AG04450 (cell line): ENCODE measurements at regions of chr3 and their contacts with region 1.

Region 1: GRCh38 chr3:14210843-14211594 is 32.4 kb downstream of the LSM3 start:
- DNase-seq: peak; percentile 47
- H3K4me3 ChIP-seq: no peak overlapping the region
- H3K27ac ChIP-seq: peak overlapping the region; percentile 39
- H3K27me3 ChIP-seq: no peaks in the 10 kb centered on the region
- CTCF ChIP-seq: no peak

Region 2: DNA sequence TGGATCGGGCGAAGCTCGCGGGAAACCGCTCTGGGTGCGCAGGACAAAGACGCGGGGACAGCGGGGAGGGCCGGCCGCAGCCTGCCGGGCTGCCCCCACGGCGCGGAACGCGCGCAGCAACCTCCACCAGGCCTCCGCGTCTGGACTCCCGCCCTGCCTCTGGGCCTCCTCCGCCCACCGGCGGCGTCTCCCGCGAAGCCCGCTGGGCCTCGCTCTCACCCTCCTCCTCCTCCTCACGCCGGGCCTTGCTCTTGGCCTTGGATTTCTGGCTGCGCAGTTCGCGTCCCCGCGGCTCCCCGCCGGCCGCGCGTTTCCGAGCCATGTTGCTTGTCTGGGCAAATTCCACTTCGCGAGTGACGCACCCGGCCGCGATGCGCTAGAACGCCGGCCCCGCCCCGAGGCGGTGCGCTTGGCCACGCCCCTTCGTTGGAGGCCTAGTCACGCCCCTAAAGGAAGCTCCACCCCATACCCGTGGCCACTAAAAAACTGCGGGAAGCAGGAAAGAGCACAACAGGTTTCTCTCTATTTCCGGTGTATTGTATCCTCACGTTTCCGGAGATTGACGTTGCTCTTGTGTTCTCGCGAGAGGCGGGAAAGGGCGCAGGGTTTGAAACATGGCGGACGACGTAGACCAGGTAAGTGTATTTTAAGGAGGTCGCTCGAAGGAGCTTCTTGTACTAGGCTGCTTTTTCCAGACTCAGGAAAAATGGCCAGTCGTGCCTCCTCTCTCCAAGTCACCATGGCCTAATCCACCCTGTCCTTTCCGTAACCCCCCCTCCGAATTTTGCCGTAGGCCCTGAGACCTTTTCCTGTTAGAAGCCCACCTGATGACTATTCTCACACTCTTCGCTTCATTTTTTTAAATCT is 32.5 kb before region 1 on chr3 and contains the starts of genes LSM3 and XPC:
- CTCF ChIA-PET with region 1: no interaction called
- POLR2A ChIA-PET with region 1: interaction called, 19 read pairs
- DNase-seq: peak; percentile 98
- H3K4me3 ChIP-seq: peak within 1 kb of the TSS; percentile 98
- H3K27ac ChIP-seq: peak within 1 kb of the TSS; percentile 94
- H3K27me3 ChIP-seq: no peaks in the 10 kb centered on the region
- CTCF ChIP-seq: no peak
- polyA plus RNA-seq, gene LSM3: 7.4 and 11.9 TPM in 2 replicates
- polyA plus RNA-seq, gene XPC: 38.4 and 39.0 TPM in 2 replicates

Region 3: DNA sequence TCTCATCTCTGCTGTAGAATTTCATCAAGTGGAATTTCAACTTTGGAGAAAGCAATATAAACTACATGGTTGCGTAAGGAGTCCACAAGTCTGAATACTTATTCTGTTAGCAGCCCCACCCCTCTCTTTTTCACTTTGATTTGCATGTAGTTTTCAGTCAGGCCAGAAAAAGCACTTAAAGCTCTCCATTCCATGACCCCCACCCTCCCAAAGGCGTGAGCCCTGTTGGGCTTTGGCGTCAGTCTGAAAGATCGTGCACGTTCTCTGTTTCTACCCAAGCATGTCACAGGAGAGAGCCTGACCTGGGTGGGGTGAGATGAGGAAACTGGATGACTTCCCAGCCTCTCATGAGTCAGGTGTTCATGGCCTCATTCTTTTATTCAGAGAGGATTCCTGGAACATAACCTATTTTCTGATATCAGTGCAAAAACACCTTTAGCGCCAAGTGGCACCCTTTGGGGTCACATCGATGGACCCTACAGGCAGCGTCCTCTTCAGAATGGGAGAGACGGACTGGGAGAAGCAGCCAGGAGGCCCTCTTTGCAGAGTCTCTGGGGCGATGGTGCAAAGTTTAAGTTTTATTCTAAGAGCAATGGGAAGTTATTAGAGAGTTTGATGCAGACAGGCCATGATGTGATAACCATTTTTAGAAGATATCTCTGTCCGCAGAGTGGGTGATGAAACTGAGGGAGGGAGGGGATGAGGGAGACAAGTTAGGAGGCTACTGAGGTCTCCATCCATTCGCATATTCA is 23.4 kb after region 1 on chr3:
- CTCF ChIA-PET with region 1: interaction called, 3 read pairs
- POLR2A ChIA-PET with region 1: interaction called, 10 read pairs
- DNase-seq: no peak
- H3K4me3 ChIP-seq: no peak overlapping the region
- H3K27ac ChIP-seq: peak overlapping the region; percentile 31
- H3K27me3 ChIP-seq: no peaks in the 10 kb centered on the region
- CTCF ChIP-seq: no peak

Region 4: DNA sequence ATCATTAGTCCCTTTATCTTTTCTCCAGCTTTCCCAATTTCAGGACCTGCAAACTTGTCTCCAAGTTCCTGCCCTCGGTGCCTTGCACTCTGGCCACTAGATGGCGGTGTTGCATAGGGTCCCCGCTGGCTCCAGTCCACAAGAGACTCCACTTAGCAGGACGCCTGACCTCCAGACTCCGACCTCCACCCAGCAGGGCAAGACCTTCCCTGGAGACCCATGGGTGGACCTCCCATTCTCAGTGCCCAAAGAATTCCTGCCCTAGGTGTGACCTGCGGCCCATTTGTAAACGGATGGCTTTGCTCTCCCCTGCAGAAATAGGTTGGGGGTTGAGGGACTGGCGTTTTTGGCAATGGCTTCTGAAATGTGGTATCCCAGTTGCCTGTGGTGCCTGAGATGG is 50.2 kb after region 1 on chr3:
- CTCF ChIA-PET with region 1: interaction called, 20 read pairs
- POLR2A ChIA-PET with region 1: no interaction called
- DNase-seq: peak; percentile 48
- H3K4me3 ChIP-seq: no peak overlapping the region
- H3K27ac ChIP-seq: no peak overlapping the region
- H3K27me3 ChIP-seq: no peaks in the 10 kb centered on the region
- CTCF ChIP-seq: peak; percentile 99

Region 5: DNA sequence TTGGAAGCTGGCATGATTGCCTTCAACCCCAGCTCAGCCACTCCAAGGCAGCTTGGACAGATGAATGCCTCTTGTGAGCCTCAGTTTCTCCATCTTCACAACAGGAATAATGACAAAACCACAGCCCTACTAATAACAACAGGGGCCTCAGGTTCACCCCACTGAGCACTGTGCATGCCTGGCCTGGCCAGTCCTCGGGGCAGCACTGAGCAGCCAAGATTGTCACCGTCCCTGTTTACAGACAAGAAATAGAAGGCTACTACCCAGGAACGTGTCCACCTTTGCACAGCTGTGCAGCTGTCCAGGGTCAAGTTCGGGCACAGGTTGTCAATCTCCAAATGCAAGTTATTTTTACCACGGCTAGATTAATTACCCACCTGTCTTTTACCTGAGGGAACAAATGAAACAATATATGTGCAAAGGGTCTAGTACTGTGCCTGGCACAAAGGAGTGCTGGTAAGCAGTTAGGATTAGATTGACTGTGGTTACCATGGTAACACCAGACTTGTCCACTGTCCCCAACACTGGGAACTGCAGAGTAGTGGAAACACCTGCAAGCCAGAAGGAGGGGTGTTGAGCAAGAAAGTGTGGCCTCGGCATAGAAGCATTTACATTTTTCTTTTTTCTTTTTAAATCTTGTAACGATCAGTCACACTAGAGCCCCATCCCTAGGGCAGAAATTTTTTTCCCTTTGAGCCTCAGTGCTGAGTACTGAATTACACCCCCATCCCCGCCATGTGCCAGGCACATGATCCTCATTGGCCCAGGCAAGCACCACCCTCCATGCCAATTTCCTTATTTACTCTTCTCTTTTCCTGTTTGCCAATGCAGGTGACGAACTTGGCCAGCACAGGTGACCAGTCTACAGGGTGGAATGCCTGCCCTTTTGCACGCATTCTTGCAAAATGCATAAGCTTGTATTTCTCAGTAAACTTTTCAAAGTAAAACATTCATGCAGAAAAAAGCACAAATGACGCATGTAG is 125.0 kb after region 1 on chr3:
- CTCF ChIA-PET with region 1: no interaction called
- POLR2A ChIA-PET with region 1: no interaction called
- DNase-seq: no peak
- H3K4me3 ChIP-seq: no peak overlapping the region
- H3K27ac ChIP-seq: no peak overlapping the region
- H3K27me3 ChIP-seq: peaks cover 19% of the 10 kb centered on the region
- CTCF ChIP-seq: no peak

Region 6: DNA sequence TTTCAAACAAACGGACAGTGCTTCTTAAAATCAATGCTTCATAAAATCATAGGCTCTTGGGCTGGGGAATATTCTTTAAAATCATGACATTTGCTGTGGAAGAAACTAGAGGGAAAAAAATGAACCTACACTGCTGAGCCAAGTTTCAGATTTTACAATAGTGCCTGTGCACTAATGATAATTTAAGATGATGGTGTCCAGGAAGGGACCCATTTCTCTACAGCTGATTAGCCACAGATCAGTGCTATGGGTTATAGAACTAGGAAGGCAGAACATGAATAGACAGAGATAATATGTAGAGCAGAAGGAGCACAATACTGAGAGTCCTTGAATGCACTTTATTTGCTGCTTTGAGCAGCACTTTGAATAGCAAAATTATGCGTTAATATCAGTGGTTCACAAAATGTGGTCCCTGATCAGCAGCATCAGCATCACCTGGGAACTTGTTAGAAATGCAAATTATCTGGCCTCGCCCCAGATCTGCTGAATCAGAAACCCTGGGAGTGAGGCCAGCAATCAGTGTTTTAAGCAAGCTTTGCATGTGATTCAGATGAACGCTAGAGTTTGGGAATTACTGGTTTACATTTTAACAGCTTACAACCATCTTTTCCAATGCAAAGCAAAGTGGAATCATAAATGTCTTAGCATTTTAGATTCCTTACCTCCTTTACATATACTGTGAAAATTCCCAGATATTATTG is 1722.6 kb after region 1 on chr3:
- CTCF ChIA-PET with region 1: no interaction called
- POLR2A ChIA-PET with region 1: no interaction called
- DNase-seq: peak; percentile 36
- H3K4me3 ChIP-seq: no peak overlapping the region
- H3K27ac ChIP-seq: no peak overlapping the region
- H3K27me3 ChIP-seq: no peaks in the 10 kb centered on the region
- CTCF ChIP-seq: no peak